ENCODE measurements at regions of chr4 and their contacts with region 1.

Region 1: DNA sequence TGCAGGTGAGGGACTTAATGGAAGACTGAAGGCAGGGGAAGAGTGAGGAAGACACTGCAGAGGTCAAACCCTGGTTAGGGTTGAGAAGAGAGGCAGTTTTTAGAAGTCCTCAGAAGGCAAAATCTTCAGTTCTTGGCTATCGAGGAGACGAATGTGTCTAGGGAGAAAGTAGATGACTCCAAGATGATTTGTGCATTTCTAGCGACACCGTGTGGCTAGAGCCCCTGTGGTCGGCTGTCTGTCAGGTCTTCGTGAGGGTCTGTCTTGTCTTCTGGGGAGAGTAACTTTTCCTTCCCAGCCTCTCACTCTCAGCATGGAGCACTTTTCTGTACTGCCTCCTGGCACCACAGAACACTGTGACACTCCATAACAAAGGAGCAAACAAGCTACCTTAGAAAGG is 458.1 kb downstream of the STIM2 start:
- DNase-seq: peak; percentile 56 to 62
- H3K4me3 ChIP-seq: no peak overlapping the region
- H3K4me3 Mint-ChIP-seq: no peak overlapping the region
- H3K27ac Mint-ChIP-seq: no peak overlapping the region
- H3K4me1 ChIP-seq: no peaks in the 10 kb centered on the region
- H3K4me1 Mint-ChIP-seq: no peaks in the 10 kb centered on the region
- H3K27me3 ChIP-seq: no peaks in the 10 kb centered on the region
- H3K27me3 Mint-ChIP-seq: peaks cover 11% of the 10 kb centered on the region
- CTCF ChIP-seq: peak; percentile 67 to 72

Region 2: DNA sequence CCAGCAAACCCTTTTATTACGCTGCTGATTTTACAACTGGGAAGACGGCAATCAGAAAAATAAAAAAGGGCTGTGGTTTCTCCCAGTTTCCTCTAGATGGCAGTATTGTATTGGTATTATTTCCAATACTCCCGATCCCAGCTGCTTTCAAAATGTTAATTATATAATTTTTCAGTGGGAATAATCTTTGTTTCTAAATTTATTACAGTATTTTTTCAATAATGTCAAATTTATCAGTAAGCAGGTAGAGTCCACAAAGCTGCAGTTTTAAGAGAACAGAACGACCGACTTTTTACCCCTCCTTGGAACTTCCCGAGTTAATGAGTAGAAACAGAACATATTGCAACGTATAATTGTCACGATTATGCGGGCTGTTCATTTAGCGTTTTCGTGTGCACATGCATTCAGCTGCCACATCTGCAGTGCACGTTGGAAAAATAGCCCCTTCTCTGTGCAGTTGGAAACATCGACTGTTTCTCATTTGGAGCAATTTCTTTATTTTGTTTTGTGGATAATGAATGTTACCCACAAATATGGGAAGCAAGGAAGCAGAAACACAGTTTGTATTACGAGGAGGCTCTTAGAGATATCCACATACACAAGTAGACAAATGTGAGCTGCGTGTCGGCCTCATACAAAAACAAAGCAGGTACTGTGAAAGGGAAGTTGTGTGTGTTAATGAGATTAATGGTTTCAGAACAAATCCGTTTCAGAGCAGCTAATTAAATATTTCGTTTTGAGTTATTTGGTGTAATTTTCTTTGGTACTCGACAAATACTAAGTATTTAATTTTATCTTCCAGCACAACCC is 270.1 kb before region 1 on chr4:
- CTCF ChIA-PET with region 1: no interaction called
- POLR2A ChIA-PET with region 1: no interaction called
- intact Hi-C with region 1: loop called (anchors 1 kb)
- DNase-seq: peak in 1 of 2 experiments; percentile 27
- H3K4me3 ChIP-seq: no peak overlapping the region
- H3K4me3 Mint-ChIP-seq: no peak overlapping the region
- H3K27ac Mint-ChIP-seq: no peak overlapping the region
- H3K4me1 ChIP-seq: no peaks in the 10 kb centered on the region
- H3K4me1 Mint-ChIP-seq: peaks cover 15% of the 10 kb centered on the region
- H3K27me3 ChIP-seq: no peaks in the 10 kb centered on the region
- H3K27me3 Mint-ChIP-seq: peaks cover 13% of the 10 kb centered on the region
- CTCF ChIP-seq: peak; percentile 58 to 66

Region 3: GRCh38 chr4:27096142-27096824 is 222.5 kb before region 1 on chr4:
- CTCF ChIA-PET with region 1: interaction called, 6 read pairs
- POLR2A ChIA-PET with region 1: no interaction called
- intact Hi-C with region 1: loop called (anchors 1 kb)
- DNase-seq: no peak
- H3K4me3 ChIP-seq: no peak overlapping the region
- H3K4me3 Mint-ChIP-seq: no peak overlapping the region
- H3K27ac Mint-ChIP-seq: no peak overlapping the region
- H3K4me1 ChIP-seq: no peaks in the 10 kb centered on the region
- H3K4me1 Mint-ChIP-seq: no peaks in the 10 kb centered on the region
- H3K27me3 ChIP-seq: no peaks in the 10 kb centered on the region
- H3K27me3 Mint-ChIP-seq: peaks cover 5% of the 10 kb centered on the region
- CTCF ChIP-seq: peak; percentile 16 to 19

Region 4: GRCh38 chr4:27149541-27150212 is 169.1 kb before region 1 on chr4:
- CTCF ChIA-PET with region 1: no interaction called
- POLR2A ChIA-PET with region 1: no interaction called
- intact Hi-C with region 1: no loop called
- DNase-seq: no peak
- H3K4me3 ChIP-seq: no peak overlapping the region
- H3K4me3 Mint-ChIP-seq: no peak overlapping the region
- H3K27ac Mint-ChIP-seq: no peak overlapping the region
- H3K4me1 ChIP-seq: no peaks in the 10 kb centered on the region
- H3K4me1 Mint-ChIP-seq: no peaks in the 10 kb centered on the region
- H3K27me3 ChIP-seq: no peaks in the 10 kb centered on the region
- H3K27me3 Mint-ChIP-seq: peaks cover 11% of the 10 kb centered on the region
- CTCF ChIP-seq: no peak

Region 5: DNA sequence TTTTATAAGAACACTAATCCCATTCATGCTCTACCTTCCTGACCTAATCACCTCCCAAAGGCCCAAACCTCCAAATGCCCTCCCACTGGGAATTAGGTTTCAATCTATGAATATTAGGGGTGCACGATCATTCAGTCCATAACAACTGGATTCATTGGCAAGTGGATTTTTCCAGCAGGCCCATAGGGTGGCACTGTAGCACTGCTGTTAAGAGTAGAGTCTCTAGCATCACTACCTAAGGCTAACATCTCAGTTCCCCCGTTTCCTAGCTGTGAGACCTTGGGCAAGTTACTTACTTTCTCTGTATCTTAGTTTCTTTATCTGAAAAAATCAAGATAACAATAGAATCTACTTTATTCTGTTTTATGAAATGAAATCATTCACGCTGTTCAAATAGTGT is 142.3 kb before region 1 on chr4:
- CTCF ChIA-PET with region 1: interaction called, 7 read pairs
- POLR2A ChIA-PET with region 1: no interaction called
- intact Hi-C with region 1: loop called (anchors 1 kb)
- DNase-seq: peak; percentile 24 to 32
- H3K4me3 ChIP-seq: no peak overlapping the region
- H3K4me3 Mint-ChIP-seq: no peak overlapping the region
- H3K27ac Mint-ChIP-seq: no peak overlapping the region
- H3K4me1 ChIP-seq: no peaks in the 10 kb centered on the region
- H3K4me1 Mint-ChIP-seq: peaks cover 7% of the 10 kb centered on the region
- H3K27me3 ChIP-seq: no peaks in the 10 kb centered on the region
- H3K27me3 Mint-ChIP-seq: peaks cover 4% of the 10 kb centered on the region
- CTCF ChIP-seq: peak; percentile 42 to 48

Measured in Caco-2 (cell line).